Activated CD4-positive, alpha-beta T cell treated with anti-CD3 and anti-CD28 coated beads for 36 hours (primary cell): ENCODE measurements at regions of chr5 and their contacts with region 1.

Region 1: GRCh38 chr5:81971712-81972495 is at the start of gene ATG10:
- DNase-seq: peak; percentile 93
- ATAC-seq: peak; percentile 95
- H3K4me3 Mint-ChIP-seq: peak within 1 kb of the TSS; percentile 96
- H3K27ac Mint-ChIP-seq: peak within 1 kb of the TSS; percentile 99
- H3K4me1 Mint-ChIP-seq: peaks cover 22% of the 10 kb centered on the region
- H3K27me3 Mint-ChIP-seq: no peaks in the 10 kb centered on the region
- total RNA-seq, gene ATG10: 4.7 to 8.1 TPM

Region 2: DNA sequence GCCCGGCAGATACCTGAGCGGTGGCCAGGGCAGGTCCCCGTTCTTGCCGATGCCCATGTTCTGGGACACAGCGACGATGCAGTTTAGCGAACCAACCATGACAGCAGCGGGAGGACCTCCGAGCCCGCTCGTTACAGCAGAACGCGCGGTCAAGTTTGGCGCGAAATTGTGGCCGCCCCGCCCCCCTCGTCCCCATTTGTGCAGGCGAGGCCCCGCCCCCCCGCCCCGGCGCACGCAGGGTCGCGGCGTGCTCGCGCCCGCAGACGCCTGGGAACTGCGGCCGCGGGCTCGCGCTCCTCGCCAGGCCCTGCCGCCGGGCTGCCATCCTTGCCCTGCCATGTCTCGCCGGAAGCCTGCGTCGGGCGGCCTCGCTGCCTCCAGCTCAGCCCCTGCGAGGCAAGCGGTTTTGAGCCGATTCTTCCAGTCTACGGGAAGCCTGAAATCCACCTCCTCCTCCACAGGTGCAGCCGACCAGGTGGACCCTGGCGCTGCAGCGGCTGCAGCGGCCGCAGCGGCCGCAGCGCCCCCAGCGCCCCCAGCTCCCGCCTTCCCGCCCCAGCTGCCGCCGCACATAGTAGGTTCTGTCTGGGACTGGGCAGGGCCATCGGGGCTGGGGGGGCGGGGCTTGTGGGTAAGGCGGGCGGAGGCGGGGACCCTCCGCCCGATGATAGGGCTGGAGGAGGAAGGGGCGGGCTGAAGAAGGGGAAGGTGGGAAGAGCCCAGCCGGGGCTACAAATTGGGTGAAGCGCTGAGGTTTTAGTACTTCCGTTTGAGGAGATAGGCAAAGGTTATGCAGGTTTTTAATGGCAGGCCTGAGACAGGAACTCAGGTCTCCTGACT is 1317.3 kb before region 1 on chr5 and contains the starts of genes DHFR and MSH3:
- CTCF ChIA-PET with region 1: no interaction called
- POLR2A ChIA-PET with region 1: no interaction called
- intact Hi-C with region 1: loop called in 1 of 2 experiments (anchors 10 kb)
- DNase-seq: peak; percentile 95
- ATAC-seq: peak; percentile 69
- H3K4me3 Mint-ChIP-seq: peak within 1 kb of the TSS; percentile 94
- H3K27ac Mint-ChIP-seq: peak within 1 kb of the TSS; percentile 99
- H3K4me1 Mint-ChIP-seq: peaks cover 21% of the 10 kb centered on the region
- H3K27me3 Mint-ChIP-seq: no peaks in the 10 kb centered on the region
- total RNA-seq, gene DHFR: 105 to 107 TPM
- total RNA-seq, gene MSH3: 25.6 to 27.1 TPM

Region 3: GRCh38 chr5:81425569-81425968 is 546.3 kb before region 1 on chr5:
- CTCF ChIA-PET with region 1: interaction called, 3 read pairs
- POLR2A ChIA-PET with region 1: no interaction called
- intact Hi-C with region 1: loop called in 1 of 2 experiments (anchors 5 kb)
- DNase-seq: no peak
- ATAC-seq: peak; percentile 70
- H3K4me3 Mint-ChIP-seq: no peak overlapping the region
- H3K27ac Mint-ChIP-seq: no peak overlapping the region
- H3K4me1 Mint-ChIP-seq: peaks cover 30% of the 10 kb centered on the region
- H3K27me3 Mint-ChIP-seq: no peaks in the 10 kb centered on the region

Region 4: DNA sequence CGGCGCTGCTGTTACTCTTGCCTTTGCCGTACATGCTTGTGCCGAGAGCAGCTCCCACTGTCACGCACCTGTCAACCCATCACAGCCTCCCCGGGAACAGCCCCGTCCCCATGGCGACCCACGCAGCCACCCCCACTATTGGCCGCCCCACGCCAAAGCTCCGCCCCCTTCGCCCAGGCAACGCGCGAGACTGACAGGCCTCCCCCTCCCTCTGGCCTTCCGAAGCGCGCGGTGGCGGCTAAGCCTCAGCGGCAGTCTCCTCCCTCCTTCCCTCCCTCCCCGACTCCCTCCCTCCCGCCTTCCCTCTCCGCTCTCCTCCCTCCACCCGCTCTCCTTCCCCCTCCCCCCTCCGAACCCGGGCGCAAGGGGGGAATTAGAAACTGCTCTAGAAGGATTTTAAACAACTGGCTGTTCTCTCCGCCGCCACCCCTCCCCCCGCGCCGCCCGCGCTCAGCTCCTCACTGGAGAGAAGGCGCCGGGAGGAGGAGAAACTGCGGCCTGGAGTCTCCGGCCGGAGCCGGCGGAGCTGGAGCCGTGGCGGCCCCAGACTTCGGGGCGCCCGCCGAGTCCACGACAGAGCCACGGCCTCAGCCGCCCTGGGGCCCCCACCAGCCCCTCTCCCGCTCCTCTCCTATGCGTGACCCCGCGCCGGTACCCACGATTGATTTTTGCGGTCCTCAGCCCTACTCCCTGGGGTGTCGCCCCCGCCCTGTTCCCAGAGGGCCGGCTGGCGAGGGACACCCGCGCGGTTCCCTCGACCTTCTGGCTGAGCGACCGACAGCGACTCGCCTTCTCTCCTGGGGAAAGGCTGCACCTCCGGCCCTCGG is 220.7 kb before region 1 on chr5 and contains the start of gene SSBP2:
- CTCF ChIA-PET with region 1: no interaction called
- POLR2A ChIA-PET with region 1: no interaction called
- intact Hi-C with region 1: loop called (anchors 1 kb)
- DNase-seq: peak; percentile 98
- ATAC-seq: peak; percentile 91
- H3K4me3 Mint-ChIP-seq: peak within 1 kb of the TSS; percentile 89
- H3K27ac Mint-ChIP-seq: peak within 1 kb of the TSS; percentile 78
- H3K4me1 Mint-ChIP-seq: peaks cover 33% of the 10 kb centered on the region
- H3K27me3 Mint-ChIP-seq: no peaks in the 10 kb centered on the region
- total RNA-seq, gene SSBP2: 16.9 to 21.4 TPM

Region 5: GRCh38 chr5:81994679-81995078 is 22.8 kb after region 1 on chr5:
- CTCF ChIA-PET with region 1: no interaction called
- POLR2A ChIA-PET with region 1: no interaction called
- intact Hi-C with region 1: no loop called
- DNase-seq: no peak
- ATAC-seq: no peak
- H3K4me3 Mint-ChIP-seq: no peak overlapping the region
- H3K27ac Mint-ChIP-seq: no peak overlapping the region
- H3K4me1 Mint-ChIP-seq: peaks cover 1% of the 10 kb centered on the region
- H3K27me3 Mint-ChIP-seq: no peaks in the 10 kb centered on the region

Region 6: GRCh38 chr5:82107267-82107666 is 135.4 kb after region 1 on chr5:
- CTCF ChIA-PET with region 1: no interaction called
- POLR2A ChIA-PET with region 1: no interaction called
- intact Hi-C with region 1: loop called (anchors 2 to 5 kb)
- DNase-seq: no peak
- ATAC-seq: no peak
- H3K4me3 Mint-ChIP-seq: no peak overlapping the region
- H3K27ac Mint-ChIP-seq: no peak overlapping the region
- H3K4me1 Mint-ChIP-seq: peaks cover 25% of the 10 kb centered on the region
- H3K27me3 Mint-ChIP-seq: no peaks in the 10 kb centered on the region

Region 7: DNA sequence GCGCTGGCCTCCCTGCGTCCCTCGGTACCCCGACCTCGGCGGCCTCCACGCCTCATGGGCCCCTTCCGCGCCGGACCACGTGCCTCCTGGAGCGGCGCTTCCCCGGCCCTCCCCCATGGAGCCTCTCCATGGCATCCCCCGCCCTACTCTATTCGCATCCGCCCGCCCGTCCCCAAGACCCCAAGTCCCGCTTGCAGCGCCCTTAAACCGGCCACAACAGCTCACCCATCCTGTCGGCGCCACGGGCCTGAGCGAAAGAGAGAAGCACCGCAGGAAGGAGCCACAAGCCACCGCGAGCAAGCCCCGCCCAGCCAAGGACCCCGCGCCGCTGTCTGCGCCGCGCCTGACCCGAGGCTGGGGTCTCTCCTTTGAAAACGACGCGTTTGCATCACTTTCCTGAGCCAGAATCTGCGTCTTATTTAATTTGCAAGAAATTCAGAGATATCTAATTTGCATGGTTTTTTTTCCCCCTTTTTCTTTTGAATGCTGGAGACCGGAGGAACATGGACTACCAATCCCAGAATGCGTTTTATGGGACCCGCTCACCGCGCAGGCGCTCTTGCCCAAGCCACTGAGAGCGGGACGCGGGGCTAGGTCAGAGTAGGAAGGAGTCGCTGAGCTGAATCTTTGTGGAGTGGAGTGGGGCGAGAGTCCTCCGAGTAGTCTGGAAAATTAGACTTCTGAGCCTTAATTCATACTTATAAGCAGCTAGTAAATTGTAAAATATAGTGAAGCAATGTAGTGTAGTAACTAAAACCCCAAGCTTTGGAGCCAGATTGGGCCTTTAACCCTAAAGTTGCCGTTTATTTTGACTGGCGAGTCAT is 306.4 kb after region 1 on chr5 and contains the start of gene RPS23:
- CTCF ChIA-PET with region 1: no interaction called
- POLR2A ChIA-PET with region 1: no interaction called
- intact Hi-C with region 1: loop called (anchors 1 to 5 kb)
- DNase-seq: peak; percentile 93
- ATAC-seq: peak; percentile 95
- H3K4me3 Mint-ChIP-seq: peak within 1 kb of the TSS; percentile 86
- H3K27ac Mint-ChIP-seq: peak within 1 kb of the TSS; percentile 99
- H3K4me1 Mint-ChIP-seq: peaks cover 46% of the 10 kb centered on the region
- H3K27me3 Mint-ChIP-seq: no peaks in the 10 kb centered on the region
- total RNA-seq, gene RPS23: 2,831 to 3,226 TPM